Ovary (tissue), 10 donors: ENCODE measurements at regions of chr12 and their contacts with region 1.

Region 1: GRCh38 chr12:44227616-44228015 is 391.7 kb downstream of the TMEM117 start:
- DNase-seq: no peak
- H3K4me3 ChIP-seq: no peak overlapping the region
- H3K27ac ChIP-seq: no peak overlapping the region
- H3K4me1 ChIP-seq: peaks cover 6% of the 10 kb centered on the region
- H3K27me3 ChIP-seq: no peaks in the 10 kb centered on the region
- CTCF ChIP-seq: no peak
- EP300 ChIP-seq: no peak
- POLR2A ChIP-seq: no peak

Region 2: GRCh38 chr12:43309959-43310358 is 917.7 kb before region 1 on chr12:
- intact Hi-C with region 1: loop called in 1 of 4 experiments (anchors 5 kb)
- DNase-seq: no peak
- H3K4me3 ChIP-seq: no peak overlapping the region
- H3K27ac ChIP-seq: no peak overlapping the region
- H3K4me1 ChIP-seq: no peaks in the 10 kb centered on the region
- H3K27me3 ChIP-seq: no peaks in the 10 kb centered on the region
- CTCF ChIP-seq: no peak
- EP300 ChIP-seq: no peak
- POLR2A ChIP-seq: no peak